ENCODE measurements at regions of chr21 and their contacts with region 1.

Region 1: GRCh38 chr21:32412162-32413014 is at the start of gene EVA1C:
- DNase-seq: no peak
- ATAC-seq: peak; percentile 75
- H3K4me3 ChIP-seq: peak within 1 kb of the TSS; percentile 43 to 58
- H3K27ac ChIP-seq: no peak within 1 kb of the TSS
- H3K4me1 ChIP-seq: peaks cover 4% of the 10 kb centered on the region; the same call in 1 of the 2 replicates
- H3K27me3 ChIP-seq: peaks cover 2% of the 10 kb centered on the region; the same call in 1 of the 2 replicates
- CTCF ChIP-seq: peak; percentile 45; the same call in 1 of the 2 replicates
- total RNA-seq, gene EVA1C: 2.8 TPM

Region 2: DNA sequence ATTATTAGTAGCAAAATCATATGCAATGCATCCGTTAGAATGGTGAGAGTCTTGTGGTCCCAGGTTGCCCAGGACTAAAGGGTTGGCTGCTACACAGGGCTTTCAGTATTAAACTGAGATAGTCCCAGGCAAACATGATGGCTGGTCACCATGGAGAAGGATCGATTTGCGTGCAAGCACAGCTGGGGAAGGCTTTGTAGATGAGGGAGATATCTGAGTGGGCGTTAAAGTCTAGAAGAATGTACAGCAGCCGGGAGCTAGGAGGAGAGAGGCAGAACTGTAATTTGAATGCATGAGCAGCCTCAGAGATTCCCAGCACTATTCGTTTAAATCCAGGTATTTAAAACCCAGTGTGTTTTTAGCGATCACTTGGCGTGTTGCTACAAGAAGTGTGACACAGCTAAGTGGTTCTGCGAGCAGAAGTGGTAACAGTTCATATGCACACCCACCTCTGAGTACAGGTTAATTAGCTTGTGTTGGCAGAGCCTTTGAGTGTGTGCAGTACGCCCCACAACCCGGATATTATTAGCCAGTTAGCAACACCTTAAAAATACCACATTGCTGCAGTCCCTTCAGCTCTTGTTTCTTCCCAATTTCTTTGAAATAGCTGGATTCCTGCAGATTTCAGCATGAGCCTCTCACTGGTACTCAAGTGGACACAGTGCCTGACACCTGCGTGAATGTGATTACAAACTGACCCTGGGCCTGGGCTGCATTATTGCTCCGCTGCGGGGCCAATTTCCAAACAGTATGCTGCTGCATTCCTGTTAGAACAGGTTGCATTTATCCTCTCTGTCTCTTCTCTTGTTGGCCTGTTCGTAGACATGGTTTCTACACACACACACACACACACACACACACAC is 613.3 kb before region 1 on chr21:
- CTCF ChIA-PET with region 1: no interaction called
- POLR2A ChIA-PET with region 1: interaction called, 10 read pairs
- in situ Hi-C with region 1: no loop called
- intact Hi-C with region 1: no loop called
- DNase-seq: no peak
- ATAC-seq: no peak
- H3K4me3 ChIP-seq: no peak overlapping the region
- H3K27ac ChIP-seq: no peak overlapping the region
- H3K4me1 ChIP-seq: no peaks in the 10 kb centered on the region
- H3K27me3 ChIP-seq: no peaks in the 10 kb centered on the region
- CTCF ChIP-seq: no peak

Region 3: GRCh38 chr21:32562426-32562825 is 150.0 kb after region 1 on chr21:
- CTCF ChIA-PET with region 1: no interaction called
- POLR2A ChIA-PET with region 1: no interaction called
- in situ Hi-C with region 1: no loop called
- intact Hi-C with region 1: loop called (anchors 5 kb)
- DNase-seq: no peak
- ATAC-seq: peak; percentile 75
- H3K4me3 ChIP-seq: no peak overlapping the region
- H3K27ac ChIP-seq: no peak overlapping the region
- H3K4me1 ChIP-seq: no peaks in the 10 kb centered on the region
- H3K27me3 ChIP-seq: no peaks in the 10 kb centered on the region
- CTCF ChIP-seq: peak; percentile 79